Right ventricle myocardium inferior (tissue), 1 donor: ENCODE measurements at regions of chr5 and their contacts with region 1.

Region 1: DNA sequence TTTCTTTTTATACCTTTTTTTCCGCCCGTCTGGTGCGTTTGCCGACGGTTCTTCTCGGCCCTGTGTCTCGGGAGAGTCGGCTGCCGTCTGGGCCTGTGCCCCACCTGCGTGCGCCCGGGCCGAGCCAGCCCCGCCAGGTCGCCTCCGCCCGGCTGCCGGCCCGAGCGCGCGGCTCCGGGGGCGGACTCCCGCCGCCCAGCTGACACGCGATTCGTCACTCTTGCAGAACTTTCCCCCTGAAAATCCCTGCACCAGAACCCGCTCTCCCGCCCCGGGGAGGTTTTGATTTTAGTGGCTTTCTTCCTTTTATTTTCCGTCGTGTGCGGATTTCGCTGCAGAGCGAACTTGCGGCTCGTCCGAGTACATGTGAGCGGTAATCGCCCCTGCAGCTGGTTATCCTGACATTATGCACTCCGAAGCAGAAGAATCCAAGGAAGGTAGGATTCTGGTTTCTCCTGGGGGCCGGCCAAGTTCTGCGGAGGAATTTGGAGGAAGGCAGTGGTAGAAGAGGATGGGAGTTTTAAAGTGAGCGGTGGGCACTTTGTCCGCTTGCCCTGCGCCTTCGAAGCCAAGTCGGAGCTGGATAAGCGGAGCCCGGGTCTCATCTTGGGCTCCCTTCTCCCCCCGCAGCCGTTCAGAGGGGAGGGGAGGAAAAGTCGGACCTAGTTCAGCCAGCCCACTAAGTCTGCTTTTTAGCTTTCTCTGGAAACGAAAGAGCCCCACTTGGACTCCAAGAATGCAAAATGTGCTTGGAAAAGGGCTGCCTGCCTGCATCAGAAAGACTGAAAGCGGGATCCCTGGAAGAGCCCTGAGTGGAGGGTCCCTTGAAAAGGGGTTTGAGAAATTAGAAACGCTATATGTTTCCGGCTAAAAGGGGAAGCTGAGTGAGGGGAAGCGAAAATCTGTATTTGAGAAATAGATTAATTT is at the start of gene TNFAIP8:
- DNase-seq: peak; percentile 79
- ATAC-seq: peak; percentile 76
- total RNA-seq, gene TNFAIP8: 17.8 TPM

Region 2: GRCh38 chr5:119400245-119400644 is 44.3 kb after region 1 on chr5:
- intact Hi-C with region 1: loop called (anchors 5 kb)
- DNase-seq: no peak
- ATAC-seq: no peak